ENCODE measurements at regions of chr16 and their contacts with region 1.

Region 1: GRCh38 chr16:85750827-85751697 is at the start of gene C16orf74:
- DNase-seq: peak; percentile 65
- ATAC-seq: peak; percentile 46
- H3K4me3 Mint-ChIP-seq: peak within 1 kb of the TSS; percentile 94
- H3K27ac Mint-ChIP-seq: peak within 1 kb of the TSS; percentile 100
- H3K4me1 Mint-ChIP-seq: peaks cover 81% of the 10 kb centered on the region
- H3K27me3 Mint-ChIP-seq: no peaks in the 10 kb centered on the region
- CTCF ChIP-seq: no peak
- total RNA-seq, gene C16orf74: 16.1 and 18.3 TPM in 2 replicates

Region 2: DNA sequence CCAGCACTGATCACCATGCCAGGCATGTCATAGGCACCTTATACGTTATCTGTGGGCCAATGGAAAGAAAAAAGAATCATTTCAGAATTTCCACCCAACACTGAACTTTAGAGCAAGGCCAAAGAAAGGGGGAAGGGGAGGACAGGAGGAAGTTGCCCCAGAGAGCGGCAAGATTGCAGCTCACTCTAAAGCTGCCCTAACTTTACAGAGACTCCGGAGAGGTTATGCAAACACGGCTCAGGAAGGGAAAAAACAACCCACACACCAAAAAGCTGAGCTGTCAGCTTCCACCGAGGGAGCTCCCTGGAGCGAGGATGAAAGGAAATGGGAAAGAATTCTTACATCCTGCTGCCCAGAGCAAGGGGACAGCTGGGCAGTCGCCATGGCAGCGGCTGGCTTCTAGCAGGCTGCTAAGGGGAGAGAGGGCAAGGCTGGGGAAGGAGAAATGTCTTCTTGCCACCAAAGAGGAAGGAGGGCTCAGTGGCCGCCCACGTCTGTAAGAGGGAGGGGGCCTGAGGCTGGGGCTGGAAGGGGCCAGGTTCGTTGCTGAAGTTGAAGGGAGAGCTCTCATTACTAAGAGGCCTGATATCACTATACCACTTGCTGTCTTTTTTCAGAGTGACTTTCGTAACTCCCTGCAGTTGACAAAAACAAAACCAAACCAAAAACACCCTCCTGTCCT is 1151.4 kb before region 1 on chr16:
- CTCF ChIA-PET with region 1: no interaction called
- POLR2A ChIA-PET with region 1: interaction called, 4 read pairs
- intact Hi-C with region 1: loop called (anchors 10 kb)
- DNase-seq: peak; percentile 55
- ATAC-seq: peak; percentile 40
- H3K4me3 Mint-ChIP-seq: peak overlapping the region; percentile 82
- H3K27ac Mint-ChIP-seq: peak overlapping the region; percentile 97
- H3K4me1 Mint-ChIP-seq: peaks cover 94% of the 10 kb centered on the region
- H3K27me3 Mint-ChIP-seq: no peaks in the 10 kb centered on the region
- CTCF ChIP-seq: no peak

Region 3: GRCh38 chr16:85027349-85027957 is 723.6 kb before region 1 on chr16 and contains the start of gene KIAA0513:
- CTCF ChIA-PET with region 1: no interaction called
- POLR2A ChIA-PET with region 1: no interaction called
- intact Hi-C with region 1: loop called (anchors 5 kb)
- DNase-seq: peak; percentile 99
- ATAC-seq: peak; percentile 87
- H3K4me3 Mint-ChIP-seq: peak within 1 kb of the TSS; percentile 89
- H3K27ac Mint-ChIP-seq: peak within 1 kb of the TSS; percentile 88
- H3K4me1 Mint-ChIP-seq: peaks cover 42% of the 10 kb centered on the region
- H3K27me3 Mint-ChIP-seq: peaks cover 11% of the 10 kb centered on the region
- CTCF ChIP-seq: no peak
- total RNA-seq, gene KIAA0513: 0.62 and 1.1 TPM in 2 replicates

Region 4: DNA sequence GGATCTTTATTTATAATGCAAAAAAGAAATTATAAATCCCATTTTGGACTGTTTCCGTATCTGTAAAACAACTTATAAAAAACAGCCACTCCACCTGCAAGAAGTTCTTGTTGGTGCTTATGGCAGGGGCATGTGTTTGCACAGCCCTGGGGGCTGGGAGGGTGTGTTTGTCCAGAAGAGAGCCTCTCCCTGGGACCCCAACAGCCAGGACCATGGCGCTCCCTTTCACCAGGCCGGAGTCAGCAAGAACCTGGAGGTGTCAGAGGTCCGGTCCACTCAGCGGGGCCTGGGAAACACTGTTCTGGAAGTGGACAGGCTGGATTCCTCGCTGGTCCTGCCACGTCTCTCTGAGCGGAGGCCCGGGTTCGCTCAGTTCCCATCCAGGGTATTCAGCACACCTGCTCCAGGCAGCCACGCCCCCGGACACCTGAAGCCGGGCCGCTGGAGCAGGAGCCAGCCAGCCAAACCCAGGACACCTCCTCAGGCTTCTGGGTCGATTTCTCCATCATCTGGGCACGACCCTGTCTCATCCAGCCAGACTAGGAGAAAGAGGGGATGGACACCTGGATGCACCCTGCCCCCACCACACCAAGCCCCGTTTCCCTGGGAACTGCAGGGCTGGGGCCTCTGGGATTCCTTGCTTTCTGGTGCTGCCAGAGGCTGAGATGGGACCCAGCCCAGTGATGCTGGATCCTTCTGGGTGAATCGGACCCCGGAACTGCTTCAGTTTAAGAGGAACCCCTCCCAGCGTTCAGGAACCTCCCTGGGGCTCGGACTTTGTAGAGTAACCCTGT is 43.3 kb before region 1 on chr16:
- CTCF ChIA-PET with region 1: no interaction called
- POLR2A ChIA-PET with region 1: no interaction called
- intact Hi-C with region 1: no loop called
- DNase-seq: no peak
- ATAC-seq: no peak
- H3K4me3 Mint-ChIP-seq: no peak overlapping the region
- H3K27ac Mint-ChIP-seq: no peak overlapping the region
- H3K4me1 Mint-ChIP-seq: no peaks in the 10 kb centered on the region
- H3K27me3 Mint-ChIP-seq: no peaks in the 10 kb centered on the region
- CTCF ChIP-seq: no peak

Region 5: GRCh38 chr16:85735225-85735635 is 15.8 kb before region 1 on chr16:
- CTCF ChIA-PET with region 1: interaction called, 4 read pairs
- POLR2A ChIA-PET with region 1: interaction called, 16 read pairs
- intact Hi-C with region 1: loop called (anchors 1 kb)
- DNase-seq: peak; percentile 28
- ATAC-seq: peak; percentile 85
- H3K4me3 Mint-ChIP-seq: peak overlapping the region; percentile 59
- H3K27ac Mint-ChIP-seq: peak overlapping the region; percentile 50
- H3K4me1 Mint-ChIP-seq: peaks cover 34% of the 10 kb centered on the region
- H3K27me3 Mint-ChIP-seq: no peaks in the 10 kb centered on the region
- CTCF ChIP-seq: no peak

Region 6: GRCh38 chr16:85799497-85800337 is 48.7 kb after region 1 on chr16 and contains the starts of genes COX4I1 and EMC8:
- CTCF ChIA-PET with region 1: no interaction called
- POLR2A ChIA-PET with region 1: interaction called, 23 read pairs
- intact Hi-C with region 1: loop called (anchors 1 kb)
- DNase-seq: peak; percentile 89
- ATAC-seq: peak; percentile 89
- H3K4me3 Mint-ChIP-seq: peak within 1 kb of the TSS; percentile 90
- H3K27ac Mint-ChIP-seq: peak within 1 kb of the TSS; percentile 84
- H3K4me1 Mint-ChIP-seq: peaks cover 53% of the 10 kb centered on the region
- H3K27me3 Mint-ChIP-seq: no peaks in the 10 kb centered on the region
- CTCF ChIP-seq: no peak
- total RNA-seq, gene COX4I1: 578 TPM in 2 replicates
- total RNA-seq, gene EMC8: 27.8 and 29.0 TPM in 2 replicates

Region 7: GRCh38 chr16:87387942-87388817 is 1637.1 kb after region 1 on chr16:
- CTCF ChIA-PET with region 1: no interaction called
- POLR2A ChIA-PET with region 1: no interaction called
- intact Hi-C with region 1: loop called (anchors 10 kb)
- DNase-seq: peak; percentile 59
- ATAC-seq: peak; percentile 62
- H3K4me3 Mint-ChIP-seq: peak overlapping the region; percentile 70
- H3K27ac Mint-ChIP-seq: peak overlapping the region; percentile 98
- H3K4me1 Mint-ChIP-seq: peaks cover 52% of the 10 kb centered on the region
- H3K27me3 Mint-ChIP-seq: peaks cover 2% of the 10 kb centered on the region
- CTCF ChIP-seq: no peak

Region 8: DNA sequence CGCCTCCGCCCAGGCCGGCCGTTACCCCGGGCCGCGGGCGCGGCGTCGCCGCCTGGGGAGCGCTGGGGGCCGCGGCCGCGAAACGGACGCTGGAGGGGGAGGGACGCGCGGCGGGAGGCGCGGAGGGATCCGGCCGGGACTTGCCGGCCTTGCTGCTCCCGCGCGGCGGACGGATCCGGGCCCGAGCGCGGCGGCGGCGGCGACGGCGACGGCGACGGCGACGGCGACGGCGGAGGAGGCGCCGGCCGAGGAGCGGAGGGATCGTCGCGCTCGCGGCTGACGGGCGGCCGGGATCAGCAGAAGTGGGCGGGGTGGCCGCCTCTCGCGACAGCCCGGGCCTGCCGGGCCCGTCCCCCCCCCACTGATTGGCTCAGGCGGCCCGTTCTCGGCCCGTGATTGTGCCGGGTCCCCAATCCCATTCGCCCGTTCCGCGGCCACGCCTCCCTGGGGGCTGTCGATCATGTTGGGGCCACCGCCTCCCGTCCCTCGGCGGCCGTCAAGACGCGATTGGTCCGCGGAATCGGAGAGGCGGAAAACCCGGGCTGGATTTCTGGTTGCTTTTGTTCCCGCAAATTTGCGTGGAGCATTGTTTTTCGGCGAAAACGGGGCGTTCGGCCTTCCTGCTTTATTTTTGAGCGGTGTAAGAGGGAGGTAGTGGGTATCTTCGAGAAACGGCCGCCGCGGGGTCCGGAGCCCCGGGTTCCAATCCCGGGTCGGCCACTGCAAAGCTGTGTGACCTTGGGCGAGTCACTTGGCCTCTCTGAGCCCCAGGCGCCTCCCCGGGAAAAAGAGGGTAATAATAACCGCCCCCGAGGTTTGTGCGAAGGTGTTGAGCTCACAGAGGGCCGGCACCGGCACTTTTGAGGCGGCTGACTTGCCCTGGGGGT is 1741.9 kb after region 1 on chr16 and contains the start of gene ZCCHC14:
- CTCF ChIA-PET with region 1: no interaction called
- POLR2A ChIA-PET with region 1: no interaction called
- intact Hi-C with region 1: loop called (anchors 10 kb)
- DNase-seq: peak; percentile 89
- ATAC-seq: peak; percentile 91
- H3K4me3 Mint-ChIP-seq: peak within 1 kb of the TSS; percentile 82
- H3K27ac Mint-ChIP-seq: peak within 1 kb of the TSS; percentile 59
- H3K4me1 Mint-ChIP-seq: peaks cover 46% of the 10 kb centered on the region
- H3K27me3 Mint-ChIP-seq: peaks cover 22% of the 10 kb centered on the region
- CTCF ChIP-seq: no peak
- total RNA-seq, gene ZCCHC14: 3.4 and 3.8 TPM in 2 replicates